ENCODE measurements at regions of chr9 and their contacts with region 1.

Region 1: DNA sequence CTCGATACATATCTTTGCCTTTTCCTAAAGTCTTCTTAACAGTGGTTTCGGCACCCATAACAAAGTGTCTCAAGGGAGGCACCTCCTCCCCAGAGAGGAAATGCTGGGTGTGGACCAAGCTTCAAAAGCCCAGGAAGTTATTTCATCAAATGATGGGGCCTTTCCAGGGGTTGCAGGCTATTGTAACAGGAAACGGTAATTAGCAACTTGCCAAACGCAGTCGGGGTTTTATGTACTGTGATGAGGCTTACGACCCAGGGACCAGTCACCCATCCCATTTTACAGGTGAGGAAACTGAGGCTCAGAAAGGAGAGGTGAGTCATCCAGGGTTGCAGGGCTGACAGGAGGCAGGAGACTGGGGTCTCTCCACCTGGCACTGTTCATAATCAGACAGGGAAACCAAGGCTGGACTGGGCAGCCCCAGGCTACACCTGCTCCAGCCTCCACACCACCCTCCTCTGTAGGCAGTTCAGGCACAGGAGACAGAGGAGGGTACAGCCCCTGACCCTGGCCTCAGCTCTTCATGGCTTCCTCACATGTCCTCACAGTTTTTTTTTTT is 30.0 kb upstream of the SUSD3 start:
- DNase-seq: peak; percentile 39 to 90 (median 74)
- ATAC-seq: peak; percentile 86 to 89 (median 86)
- H3K4me3 ChIP-seq: peak overlapping the region; percentile 35 to 43
- H3K4me3 Mint-ChIP-seq: peak overlapping the region; percentile 76 to 81 (median 78)
- H3K27ac ChIP-seq: peak overlapping the region; percentile 92
- H3K27ac Mint-ChIP-seq: peak overlapping the region; percentile 96 to 99
- H3K4me1 ChIP-seq: peaks cover 70 to 96% of the 10 kb centered on the region in 2 experiments
- H3K4me1 Mint-ChIP-seq: peaks cover 86 to 94% (median 90%) of the 10 kb centered on the region in 3 donors
- H3K27me3 ChIP-seq: no peaks in the 10 kb centered on the region
- H3K27me3 Mint-ChIP-seq: no peaks in the 10 kb centered on the region

Region 2: DNA sequence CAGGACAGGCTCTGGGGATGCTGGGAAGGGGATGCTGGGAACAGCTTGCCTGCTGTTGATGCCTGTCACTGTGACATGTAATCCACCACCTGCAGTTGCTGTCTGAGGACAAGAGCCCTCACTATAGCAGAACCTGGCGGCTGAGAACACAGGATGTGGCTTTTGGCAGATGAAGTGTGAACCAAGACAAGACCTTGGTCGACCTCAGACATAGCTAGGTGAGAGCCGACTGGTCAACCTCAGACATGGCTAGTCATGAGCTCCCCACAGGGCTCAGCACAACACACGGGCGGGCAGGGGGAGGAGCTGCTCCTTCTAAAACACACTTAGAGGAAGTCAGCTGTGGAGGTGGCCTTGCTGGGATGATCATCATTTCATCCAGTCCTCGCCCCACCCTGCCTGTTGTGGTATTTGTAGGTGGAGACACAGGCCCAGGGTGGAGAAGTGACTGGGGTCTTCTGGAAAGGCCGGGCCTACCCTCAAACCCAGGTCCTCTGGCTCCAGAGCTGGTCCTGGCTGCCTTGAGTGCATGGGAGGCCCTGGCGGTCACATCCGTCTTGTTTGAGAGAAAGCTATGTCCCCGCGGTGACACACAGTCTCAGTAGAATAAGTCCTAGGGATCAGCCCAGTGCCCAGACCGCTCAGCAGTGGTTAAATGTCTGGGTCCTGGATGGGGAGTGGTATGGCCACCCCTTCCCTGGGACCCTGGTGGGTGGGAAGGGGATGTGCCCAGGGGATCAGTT is 36.0 kb after region 1 on chr9:
- CTCF ChIA-PET with region 1: interaction called, 3 to 10 read pairs
- POLR2A ChIA-PET with region 1: interaction called, 3 to 6 read pairs
- DNase-seq: peak; percentile 75 to 96 (median 90)
- ATAC-seq: peak; percentile 89 to 93 (median 90)
- H3K4me3 ChIP-seq: peak overlapping the region; percentile 40 to 42
- H3K4me3 Mint-ChIP-seq: peak overlapping the region; percentile 82 to 92 (median 86)
- H3K27ac ChIP-seq: peak overlapping the region; percentile 83
- H3K27ac Mint-ChIP-seq: peak overlapping the region; percentile 99 to 100
- H3K4me1 ChIP-seq: peaks cover 47 to 80% of the 10 kb centered on the region in 2 experiments
- H3K4me1 Mint-ChIP-seq: peaks cover 95 to 99% (median 97%) of the 10 kb centered on the region in 3 donors
- H3K27me3 ChIP-seq: no peaks in the 10 kb centered on the region
- H3K27me3 Mint-ChIP-seq: no peaks in the 10 kb centered on the region

Region 3: GRCh38 chr9:93143830-93144530 is 115.5 kb after region 1 on chr9:
- CTCF ChIA-PET with region 1: interaction called in 1 of 2 experiments, 4 read pairs
- POLR2A ChIA-PET with region 1: interaction called in 1 of 2 experiments, 15 read pairs
- DNase-seq: peak; percentile 58 to 82 (median 70)
- ATAC-seq: peak; percentile 96 to 98 (median 96)
- H3K4me3 ChIP-seq: peak overlapping the region in 1 of 2 donors; percentile 17
- H3K4me3 Mint-ChIP-seq: peak overlapping the region; percentile 11 to 69 (median 21)
- H3K27ac ChIP-seq: peak overlapping the region; percentile 82
- H3K27ac Mint-ChIP-seq: peak overlapping the region; percentile 98
- H3K4me1 ChIP-seq: peaks cover 23 to 61% of the 10 kb centered on the region in 2 experiments
- H3K4me1 Mint-ChIP-seq: peaks cover 50 to 63% (median 51%) of the 10 kb centered on the region in 3 donors
- H3K27me3 ChIP-seq: no peaks in the 10 kb centered on the region
- H3K27me3 Mint-ChIP-seq: no peaks in the 10 kb centered on the region

Region 4: DNA sequence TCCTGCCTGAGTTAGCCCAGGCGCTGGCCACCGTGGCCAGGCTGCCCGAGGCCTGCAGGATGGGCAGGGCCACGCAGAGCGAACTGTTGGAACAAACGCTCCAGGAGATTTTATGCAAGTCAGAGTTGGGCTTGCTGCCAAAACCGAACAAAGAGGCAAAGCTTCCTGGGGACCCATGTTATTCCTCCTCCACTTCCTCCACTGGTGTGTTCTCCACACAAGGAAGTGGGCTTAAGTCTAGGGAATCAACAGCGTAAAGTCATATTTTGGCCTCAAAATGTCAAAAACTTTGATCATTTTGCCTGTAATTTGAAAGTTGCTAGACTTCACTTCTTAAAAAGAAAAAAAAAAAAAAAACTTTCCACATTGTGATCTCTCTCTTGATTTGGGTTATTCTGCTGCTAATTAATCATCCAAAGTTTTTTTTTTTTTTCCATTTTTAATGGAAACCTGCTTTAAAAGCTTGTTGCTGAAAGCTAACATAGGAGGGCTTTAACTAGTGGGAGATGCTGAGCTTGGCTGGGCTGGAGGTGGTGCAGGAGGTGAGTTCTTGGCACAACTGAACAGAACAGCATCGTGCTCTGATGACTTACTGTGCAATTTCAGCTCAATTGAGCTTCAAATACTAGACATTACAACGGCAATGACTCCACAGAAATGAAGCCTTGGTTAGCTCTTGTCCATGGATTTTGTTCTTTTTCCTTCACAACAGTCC is 1128.7 kb after region 1 on chr9:
- CTCF ChIA-PET with region 1: no interaction called
- POLR2A ChIA-PET with region 1: no interaction called
- DNase-seq: no peak
- ATAC-seq: no peak
- H3K4me3 ChIP-seq: no peak overlapping the region
- H3K4me3 Mint-ChIP-seq: peak overlapping the region in 1 of 3 donors; percentile 10
- H3K27ac ChIP-seq: no peak overlapping the region
- H3K27ac Mint-ChIP-seq: no peak overlapping the region
- H3K4me1 ChIP-seq: peaks cover 9 to 18% of the 10 kb centered on the region in 2 experiments
- H3K4me1 Mint-ChIP-seq: peaks cover 22 to 27% (median 24%) of the 10 kb centered on the region in 3 donors
- H3K27me3 ChIP-seq: peaks cover 0 to 14% of the 10 kb centered on the region in 2 experiments
- H3K27me3 Mint-ChIP-seq: no peaks in the 10 kb centered on the region